Mammary epithelial cell (primary cell): ENCODE measurements at regions of chr6 and their contacts with region 1.

Region 1: GRCh38 chr6:21593412-21593926 is at the start of gene SOX4:
- DNase-seq: peak; percentile 95
- H3K4me3 ChIP-seq: peak within 1 kb of the TSS; percentile 85 to 98 (median 97)
- H3K27ac ChIP-seq: peak within 1 kb of the TSS; percentile 64
- H3K4me1 ChIP-seq: peaks cover 13% of the 10 kb centered on the region
- H3K27me3 ChIP-seq: no peaks in the 10 kb centered on the region
- CTCF ChIP-seq: no peak
- total RNA-seq, gene SOX4: 22.3 to 64.8 TPM

Region 2: GRCh38 chr6:20669571-20670314 is 923.7 kb before region 1 on chr6:
- CTCF ChIA-PET with region 1: no interaction called
- dilution Hi-C with region 1: no loop called
- in situ Hi-C with region 1: loop called in 1 of 2 experiments (anchors 25 kb)
- intact Hi-C with region 1: no loop called
- DNase-seq: no peak
- H3K4me3 ChIP-seq: no peak overlapping the region
- H3K27ac ChIP-seq: no peak overlapping the region
- H3K4me1 ChIP-seq: no peaks in the 10 kb centered on the region
- H3K27me3 ChIP-seq: no peaks in the 10 kb centered on the region
- CTCF ChIP-seq: no peak

Region 3: DNA sequence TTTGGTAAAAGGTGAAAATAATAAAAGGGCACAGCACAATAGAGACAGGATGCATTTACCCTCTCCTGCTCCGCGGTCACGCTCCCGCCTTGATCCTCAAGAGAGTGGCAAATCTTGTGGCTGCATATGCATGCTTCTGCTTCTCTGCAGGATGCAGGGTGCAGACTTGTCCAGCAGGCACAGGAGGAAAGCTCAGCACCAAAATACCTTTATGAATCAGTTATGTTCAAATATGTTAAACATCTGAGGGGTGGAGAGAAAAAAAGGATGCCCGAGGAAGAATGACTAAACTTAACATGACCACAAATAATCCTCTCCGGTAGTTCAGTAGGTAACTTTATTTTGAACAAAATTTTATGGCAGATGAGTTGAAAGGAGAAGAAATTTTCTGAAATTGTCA is 366.0 kb before region 1 on chr6:
- CTCF ChIA-PET with region 1: no interaction called
- dilution Hi-C with region 1: no loop called
- in situ Hi-C with region 1: no loop called
- intact Hi-C with region 1: loop called (anchors 1 kb)
- DNase-seq: peak; percentile 85
- H3K4me3 ChIP-seq: no peak overlapping the region
- H3K27ac ChIP-seq: peak overlapping the region; percentile 80
- H3K4me1 ChIP-seq: peaks cover 39% of the 10 kb centered on the region
- H3K27me3 ChIP-seq: no peaks in the 10 kb centered on the region
- CTCF ChIP-seq: peak in 1 of 2 donors; percentile 52

Region 4: GRCh38 chr6:21754891-21755290 is 161.4 kb after region 1 on chr6:
- CTCF ChIA-PET with region 1: no interaction called
- dilution Hi-C with region 1: no loop called
- in situ Hi-C with region 1: no loop called
- intact Hi-C with region 1: loop called (anchors 5 kb)
- DNase-seq: peak; percentile 92
- H3K4me3 ChIP-seq: no peak overlapping the region
- H3K27ac ChIP-seq: peak overlapping the region; percentile 67
- H3K4me1 ChIP-seq: peaks cover 37% of the 10 kb centered on the region
- H3K27me3 ChIP-seq: no peaks in the 10 kb centered on the region
- CTCF ChIP-seq: no peak

Region 5: DNA sequence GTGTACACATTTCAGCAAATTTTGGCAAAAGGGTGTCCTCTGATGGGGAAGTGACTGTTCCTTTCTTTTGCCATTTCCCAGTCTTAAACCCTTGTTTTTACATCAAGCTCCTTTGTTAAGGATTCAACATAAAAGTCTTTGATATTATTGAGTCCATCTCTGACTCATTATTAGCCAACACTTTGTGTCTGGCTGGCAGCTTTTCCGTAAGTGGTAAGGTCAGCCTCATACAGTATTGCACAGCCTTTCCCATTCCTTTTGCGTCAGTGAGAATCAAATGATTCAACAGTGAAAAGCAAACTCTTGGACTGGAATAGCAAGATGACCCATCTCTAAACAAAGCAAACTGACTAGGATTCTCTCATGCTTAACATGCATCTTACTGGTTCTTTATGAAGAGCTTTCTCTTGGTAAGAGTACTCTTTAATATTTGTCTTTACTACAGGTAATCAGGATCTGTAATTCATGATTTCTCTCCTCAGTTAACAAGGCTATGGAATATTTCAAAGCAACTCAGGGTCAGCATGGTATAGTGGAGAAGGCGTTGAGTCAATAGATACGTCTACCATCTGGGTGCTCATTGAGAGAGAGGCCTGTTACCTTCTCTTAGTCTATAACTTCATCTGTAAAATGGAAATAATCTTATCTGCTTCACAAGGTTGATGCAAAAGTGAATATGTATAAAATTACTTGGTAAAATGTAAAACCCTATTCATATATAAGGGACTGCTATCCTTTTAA is 519.7 kb after region 1 on chr6:
- CTCF ChIA-PET with region 1: no interaction called
- dilution Hi-C with region 1: no loop called
- in situ Hi-C with region 1: no loop called
- intact Hi-C with region 1: loop called (anchors 10 kb)
- DNase-seq: peak; percentile 97
- H3K4me3 ChIP-seq: no peak overlapping the region
- H3K27ac ChIP-seq: no peak overlapping the region
- H3K4me1 ChIP-seq: peaks cover 4% of the 10 kb centered on the region
- H3K27me3 ChIP-seq: no peaks in the 10 kb centered on the region
- CTCF ChIP-seq: no peak

Region 6: GRCh38 chr6:22448291-22448711 is 854.8 kb after region 1 on chr6:
- CTCF ChIA-PET with region 1: no interaction called
- dilution Hi-C with region 1: no loop called
- in situ Hi-C with region 1: no loop called
- intact Hi-C with region 1: loop called (anchors 10 kb)
- DNase-seq: no peak
- H3K4me3 ChIP-seq: no peak overlapping the region
- H3K27ac ChIP-seq: no peak overlapping the region
- H3K4me1 ChIP-seq: no peaks in the 10 kb centered on the region
- H3K27me3 ChIP-seq: no peaks in the 10 kb centered on the region
- CTCF ChIP-seq: no peak

Region 7: DNA sequence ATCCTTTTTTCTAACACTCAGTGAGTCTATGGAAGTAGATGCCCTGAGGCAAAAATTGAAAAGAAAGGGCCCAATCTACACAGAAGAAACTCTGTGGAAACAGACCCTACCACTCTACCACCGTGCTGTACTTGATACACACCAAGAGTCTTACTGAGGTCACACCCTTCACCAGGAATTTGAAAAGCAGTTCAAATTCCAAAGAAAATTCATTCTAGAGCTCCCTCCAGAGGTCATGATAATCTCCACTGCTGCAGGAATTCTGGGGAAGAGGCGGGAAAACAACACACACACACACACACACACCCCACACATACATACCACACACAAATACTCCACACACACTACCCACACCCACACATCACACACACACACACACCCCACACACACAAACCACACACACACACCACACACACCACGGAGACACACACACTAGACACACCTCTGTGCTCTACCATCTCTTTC is 1312.7 kb after region 1 on chr6:
- CTCF ChIA-PET with region 1: no interaction called
- dilution Hi-C with region 1: no loop called
- in situ Hi-C with region 1: no loop called
- intact Hi-C with region 1: loop called (anchors 10 kb)
- DNase-seq: peak; percentile 42
- H3K4me3 ChIP-seq: no peak overlapping the region
- H3K27ac ChIP-seq: no peak overlapping the region
- H3K4me1 ChIP-seq: peaks cover 12% of the 10 kb centered on the region
- H3K27me3 ChIP-seq: no peaks in the 10 kb centered on the region
- CTCF ChIP-seq: peak; percentile 30 to 52